ENCODE measurements at regions of chr6 and their contacts with region 1.

Region 1: GRCh38 chr6:4253604-4254231 is 118.3 kb upstream of the ECI2 start:
- DNase-seq: peak; percentile 12
- H3K4me3 ChIP-seq: no peak overlapping the region
- CTCF ChIP-seq: peak; percentile 65

Region 2: GRCh38 chr6:4240148-4240547 is 13.6 kb before region 1 on chr6:
- CTCF ChIA-PET with region 1: interaction called, 10 read pairs
- POLR2A ChIA-PET with region 1: no interaction called
- DNase-seq: no peak
- H3K4me3 ChIP-seq: no peak overlapping the region
- CTCF ChIP-seq: no peak

Region 3: GRCh38 chr6:4264086-4264485 is 10.4 kb after region 1 on chr6:
- CTCF ChIA-PET with region 1: interaction called, 16 read pairs
- POLR2A ChIA-PET with region 1: no interaction called
- DNase-seq: no peak
- H3K4me3 ChIP-seq: no peak overlapping the region
- CTCF ChIP-seq: no peak

Region 4: DNA sequence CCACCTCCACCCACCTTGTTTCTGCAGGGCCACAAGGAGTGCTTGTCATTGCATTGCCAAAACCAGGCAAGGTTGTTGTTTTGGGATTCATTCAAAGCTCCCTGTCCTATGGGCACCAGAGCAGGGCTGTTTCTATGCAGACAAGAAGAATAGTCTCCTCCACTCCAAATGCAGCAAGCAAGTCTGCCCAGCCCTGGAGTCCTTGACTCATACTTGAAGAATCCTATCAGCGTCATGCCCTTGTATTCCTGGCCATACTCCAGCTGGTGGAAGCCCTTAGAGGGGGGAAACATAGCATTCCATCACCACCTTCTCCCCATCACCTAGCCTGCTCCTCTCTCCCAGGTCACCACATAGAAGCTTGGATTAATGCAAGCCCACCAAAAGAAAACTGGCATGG is 27.0 kb after region 1 on chr6:
- CTCF ChIA-PET with region 1: interaction called, 13 read pairs
- POLR2A ChIA-PET with region 1: no interaction called
- DNase-seq: peak; percentile 83
- H3K4me3 ChIP-seq: no peak overlapping the region
- CTCF ChIP-seq: no peak

Region 5: DNA sequence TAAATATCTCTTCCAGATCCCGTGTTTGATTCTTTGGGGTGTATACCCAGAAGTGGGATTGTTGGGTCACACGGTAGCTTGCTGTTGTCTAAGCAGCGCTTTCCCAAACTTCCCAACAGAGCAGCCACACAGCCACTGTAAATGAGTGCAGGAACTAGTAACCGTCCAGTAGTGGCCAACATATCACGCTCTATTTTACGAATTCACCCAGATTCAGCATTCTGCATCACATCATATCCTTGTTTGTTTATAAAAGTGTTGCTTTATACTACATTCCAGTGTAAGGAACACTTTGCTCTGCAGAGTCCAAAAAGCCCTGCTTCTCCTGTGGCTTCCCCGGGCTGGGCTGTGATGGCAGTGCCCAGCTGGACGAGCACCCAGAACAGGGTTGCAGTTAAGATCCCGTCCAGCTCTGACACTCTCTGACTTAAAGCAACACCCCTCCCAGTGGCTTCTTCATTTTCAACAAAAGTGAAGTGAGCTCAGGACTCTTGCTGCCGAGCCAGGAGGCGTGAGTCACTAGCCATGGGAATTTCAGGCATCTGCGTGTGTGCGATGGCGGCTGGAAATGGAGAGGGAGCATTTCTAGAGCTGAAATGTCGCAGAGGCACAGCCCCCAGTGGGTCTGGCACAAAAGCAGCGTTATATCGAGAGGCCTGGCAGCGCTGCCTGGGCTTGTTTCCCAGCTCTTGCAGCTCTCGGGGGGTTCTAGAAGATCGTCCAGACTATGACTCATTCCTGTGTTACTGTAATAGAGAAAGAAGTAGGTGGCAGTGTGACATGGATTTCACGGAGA is 98.0 kb after region 1 on chr6:
- CTCF ChIA-PET with region 1: no interaction called
- POLR2A ChIA-PET with region 1: no interaction called
- DNase-seq: peak; percentile 89
- H3K4me3 ChIP-seq: peak overlapping the region; percentile 20
- CTCF ChIP-seq: no peak

Region 6: GRCh38 chr6:4635666-4636065 is 381.9 kb after region 1 on chr6:
- CTCF ChIA-PET with region 1: no interaction called
- POLR2A ChIA-PET with region 1: no interaction called
- DNase-seq: no peak
- H3K4me3 ChIP-seq: no peak overlapping the region
- CTCF ChIP-seq: no peak